ENCODE measurements at regions of chr7 and their contacts with region 1.

Region 1: GRCh38 chr7:123154231-123154860 is 45.4 kb downstream of the SLC13A1 start:
- DNase-seq: peak; percentile 83
- H3K4me3 ChIP-seq: no peak overlapping the region
- H3K27ac ChIP-seq: no peak overlapping the region
- H3K4me1 ChIP-seq: no peaks in the 10 kb centered on the region
- H3K27me3 ChIP-seq: no peaks in the 10 kb centered on the region
- CTCF ChIP-seq: peak; percentile 75

Region 2: GRCh38 chr7:122219253-122219865 is 935.0 kb before region 1 on chr7:
- intact Hi-C with region 1: loop called (anchors 10 kb)
- DNase-seq: no peak
- H3K4me3 ChIP-seq: no peak overlapping the region
- H3K27ac ChIP-seq: no peak overlapping the region
- H3K4me1 ChIP-seq: no peaks in the 10 kb centered on the region
- H3K27me3 ChIP-seq: no peaks in the 10 kb centered on the region
- CTCF ChIP-seq: peak; percentile 64

Region 3: DNA sequence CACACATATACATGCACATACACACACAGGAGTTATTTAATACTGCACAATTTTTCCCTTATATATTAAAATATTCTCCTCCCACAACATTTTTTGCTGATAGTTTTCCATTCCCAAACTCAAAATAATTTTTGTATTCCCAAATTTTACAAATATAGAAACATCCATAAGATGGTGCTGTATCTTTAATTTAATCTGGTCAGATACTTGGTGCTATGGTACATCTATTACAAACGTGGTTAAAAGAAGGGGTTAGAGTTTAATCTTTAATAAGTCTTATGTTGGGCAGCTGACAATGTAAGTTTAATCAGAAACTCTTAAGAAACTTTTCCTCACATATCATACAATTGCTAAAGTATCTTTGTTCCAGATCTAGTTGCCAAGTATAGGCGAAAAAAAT is 257.8 kb before region 1 on chr7:
- intact Hi-C with region 1: loop called (anchors 10 kb)
- DNase-seq: no peak
- H3K4me3 ChIP-seq: no peak overlapping the region
- H3K27ac ChIP-seq: no peak overlapping the region
- H3K4me1 ChIP-seq: no peaks in the 10 kb centered on the region
- H3K27me3 ChIP-seq: no peaks in the 10 kb centered on the region
- CTCF ChIP-seq: no peak